B cell (primary cell): ENCODE measurements at regions of chr15 and their contacts with region 1.

Region 1: GRCh38 chr15:46166750-46167149 is 531.9 kb downstream of the SQOR start:
- DNase-seq: no peak
- ATAC-seq: no peak
- H3K4me3 ChIP-seq: no peak overlapping the region
- H3K4me3 Mint-ChIP-seq: no peak overlapping the region
- H3K27ac ChIP-seq: no peak overlapping the region
- H3K27ac Mint-ChIP-seq: no peak overlapping the region
- H3K4me1 ChIP-seq: no peaks in the 10 kb centered on the region
- H3K4me1 Mint-ChIP-seq: no peaks in the 10 kb centered on the region
- H3K27me3 ChIP-seq: no peaks in the 10 kb centered on the region
- H3K27me3 Mint-ChIP-seq: no peaks in the 10 kb centered on the region
- CTCF ChIP-seq: no peak

Region 2: GRCh38 chr15:46222826-46223225 is 56.1 kb after region 1 on chr15:
- CTCF ChIA-PET with region 1: no interaction called
- POLR2A ChIA-PET with region 1: no interaction called
- intact Hi-C with region 1: no loop called
- DNase-seq: no peak
- ATAC-seq: no peak
- H3K4me3 ChIP-seq: no peak overlapping the region
- H3K4me3 Mint-ChIP-seq: no peak overlapping the region
- H3K27ac ChIP-seq: no peak overlapping the region
- H3K27ac Mint-ChIP-seq: no peak overlapping the region
- H3K4me1 ChIP-seq: no peaks in the 10 kb centered on the region
- H3K4me1 Mint-ChIP-seq: no peaks in the 10 kb centered on the region
- H3K27me3 ChIP-seq: no peaks in the 10 kb centered on the region
- H3K27me3 Mint-ChIP-seq: no peaks in the 10 kb centered on the region
- CTCF ChIP-seq: no peak

Region 3: DNA sequence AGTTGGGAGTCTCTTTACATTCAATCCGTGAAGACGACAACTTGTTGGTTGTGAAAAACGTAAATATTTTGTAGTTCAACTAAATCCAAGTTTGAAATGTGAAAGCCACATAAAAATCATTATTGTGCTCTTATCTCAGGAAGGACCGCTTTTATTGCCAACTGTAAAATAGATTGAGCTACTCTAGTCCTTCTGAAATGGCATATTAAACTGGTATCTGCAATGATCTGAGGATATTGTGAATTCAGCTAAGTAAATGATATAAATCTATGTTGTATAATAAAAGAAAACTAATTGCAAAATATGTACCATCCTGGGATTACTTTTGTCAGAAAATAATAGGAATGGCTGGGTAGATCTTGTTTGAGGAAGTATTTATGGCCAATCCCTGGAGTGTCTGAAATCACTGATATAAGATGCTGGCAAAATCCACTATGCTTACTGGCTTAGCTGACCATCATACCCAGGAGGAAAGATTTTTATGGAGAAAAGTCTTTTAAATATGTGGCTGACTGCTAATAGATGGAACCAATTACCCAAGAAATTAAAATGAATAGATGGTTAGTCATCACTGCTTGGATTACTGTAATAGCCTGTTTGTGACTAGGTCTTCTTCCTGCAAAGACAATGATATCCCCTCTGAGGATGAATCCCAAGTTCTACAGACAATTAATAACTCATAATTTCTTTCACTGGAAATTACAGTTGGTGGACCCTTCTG is 1742.4 kb after region 1 on chr15:
- CTCF ChIA-PET with region 1: no interaction called
- POLR2A ChIA-PET with region 1: no interaction called
- intact Hi-C with region 1: loop called (anchors 5 kb)
- DNase-seq: no peak
- ATAC-seq: no peak
- H3K4me3 ChIP-seq: no peak overlapping the region
- H3K4me3 Mint-ChIP-seq: no peak overlapping the region
- H3K27ac ChIP-seq: no peak overlapping the region
- H3K27ac Mint-ChIP-seq: no peak overlapping the region
- H3K4me1 ChIP-seq: no peaks in the 10 kb centered on the region
- H3K4me1 Mint-ChIP-seq: no peaks in the 10 kb centered on the region
- H3K27me3 ChIP-seq: no peaks in the 10 kb centered on the region
- H3K27me3 Mint-ChIP-seq: no peaks in the 10 kb centered on the region
- CTCF ChIP-seq: no peak